ENCODE measurements at regions of chr3 and their contacts with region 1.

Region 1: DNA sequence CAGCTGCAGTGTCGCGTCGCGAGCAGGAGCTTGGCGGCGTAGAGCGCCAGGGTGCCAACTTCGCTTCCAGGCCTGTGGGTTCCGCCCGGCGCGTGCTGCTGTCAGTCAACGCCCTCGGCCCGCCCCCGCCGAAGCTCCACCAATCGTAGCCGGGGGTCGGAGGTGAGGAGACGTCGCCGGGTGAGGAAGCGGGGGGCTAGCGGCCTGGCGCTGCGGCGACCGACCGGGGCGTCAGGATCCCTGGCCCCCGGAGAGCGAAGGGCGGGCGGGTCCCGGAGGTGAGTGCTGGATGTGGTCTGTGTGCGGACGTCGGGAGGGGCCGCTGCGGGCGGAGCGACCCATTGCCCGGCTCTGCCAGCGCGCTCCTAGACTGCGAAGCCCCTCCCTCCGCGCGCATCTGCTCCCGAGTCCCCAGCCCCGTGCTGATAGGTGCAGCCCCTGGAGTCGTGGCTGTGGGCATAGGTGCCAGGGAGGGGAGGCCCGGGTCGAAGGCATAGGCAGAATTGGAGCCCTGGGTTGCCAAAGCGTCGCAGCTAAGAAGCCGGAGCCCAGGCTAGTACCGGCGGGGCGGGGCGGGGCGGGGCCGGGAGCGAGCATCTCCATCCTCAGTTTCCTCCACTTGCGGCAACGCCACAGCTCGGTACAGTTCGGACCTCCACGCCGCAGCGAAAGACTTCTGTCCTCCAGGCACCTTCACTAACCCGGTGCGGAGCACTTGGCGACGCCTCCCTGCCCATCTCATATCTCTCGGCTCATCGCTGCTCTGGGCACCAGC is at the start of gene NXPE3:
- DNase-seq: peak; percentile 97
- ATAC-seq: peak; percentile 96
- total RNA-seq, gene NXPE3: 42.0 TPM

Region 2: GRCh38 chr3:101676765-101677435 is 102.3 kb before region 1 on chr3 and contains the start of gene ZBTB11:
- intact Hi-C with region 1: loop called (anchors 2 kb)
- DNase-seq: peak; percentile 99
- ATAC-seq: peak; percentile 95
- total RNA-seq, gene ZBTB11: 9.7 TPM